Activated naive CD4-positive, alpha-beta T cell treated with anti-CD3 and anti-CD28 coated beads, Interleukin-2, amount 10 ng/mL, durations not matched to agents 7 days and 5 days (primary cell): ENCODE measurements at regions of chr22 and their contacts with region 1.

Region 1: DNA sequence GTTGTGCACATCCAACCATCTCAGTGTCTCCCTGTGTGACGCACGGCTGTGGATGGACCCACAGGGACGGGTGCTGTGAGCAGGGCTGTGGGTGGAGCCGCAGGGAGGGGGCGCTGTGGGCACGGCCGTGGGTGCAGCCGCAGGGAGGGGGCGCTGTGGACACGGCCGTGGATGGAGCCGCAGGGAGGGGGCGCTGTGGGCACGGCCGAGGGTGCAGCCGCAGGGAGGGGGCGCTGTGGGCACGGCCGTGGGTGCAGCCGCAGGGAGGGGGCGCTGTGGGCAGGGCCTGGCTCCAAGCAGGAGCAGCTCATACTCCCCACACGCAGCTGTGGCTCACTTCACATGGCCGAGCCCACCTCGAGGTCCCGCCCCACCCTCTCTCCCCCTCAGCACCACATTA is 6.0 kb upstream of the MAPK11 start:
- DNase-seq: peak; percentile 63
- H3K4me3 Mint-ChIP-seq: no peak overlapping the region
- H3K27ac Mint-ChIP-seq: no peak overlapping the region
- H3K4me1 Mint-ChIP-seq: peaks cover under 1% of the 10 kb centered on the region
- H3K27me3 Mint-ChIP-seq: peaks cover 31% of the 10 kb centered on the region

Region 2: DNA sequence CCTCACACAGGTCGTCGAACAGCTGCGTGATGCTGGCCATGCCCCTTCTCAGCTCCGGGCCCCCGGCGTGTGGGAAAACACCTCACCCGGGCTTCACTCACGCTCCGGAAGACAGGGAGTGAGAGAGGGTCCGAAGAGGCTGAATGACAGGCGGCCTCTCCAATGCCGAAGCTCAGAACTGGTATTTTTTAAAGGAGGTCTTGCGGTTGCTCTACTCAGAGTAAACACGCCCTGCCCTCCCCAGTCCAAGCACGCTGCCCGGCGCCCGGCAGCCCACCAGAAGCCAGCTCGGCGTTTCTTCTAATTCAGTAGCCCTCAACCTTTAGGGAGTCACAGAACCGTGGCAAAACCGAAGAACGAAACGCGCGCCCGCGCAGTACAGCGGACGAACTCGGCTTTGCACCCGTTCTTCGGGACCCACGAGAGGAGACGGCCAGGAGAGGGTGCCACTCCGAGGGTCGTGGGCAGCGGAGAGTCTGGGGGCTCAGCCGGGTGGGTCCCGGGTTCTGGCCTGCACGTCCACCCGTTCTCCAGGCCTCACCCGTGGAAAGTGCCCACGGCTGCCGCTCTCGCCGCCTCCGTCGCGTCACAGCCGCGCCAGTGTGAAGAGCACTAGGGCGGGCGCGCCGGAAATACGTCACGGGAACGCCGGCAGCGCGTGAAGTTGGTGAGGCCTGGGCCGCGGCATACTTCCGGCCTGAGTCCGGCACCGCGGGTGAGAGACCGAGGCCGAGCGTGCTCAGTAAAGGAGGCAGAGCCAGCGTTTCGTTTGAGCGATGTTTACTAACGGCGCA is 31.5 kb before region 1 on chr22 and contains the start of gene TUBGCP6:
- CTCF ChIA-PET with region 1: no interaction called
- DNase-seq: peak; percentile 95
- H3K4me3 Mint-ChIP-seq: peak within 1 kb of the TSS; percentile 97
- H3K27ac Mint-ChIP-seq: peak within 1 kb of the TSS; percentile 98
- H3K4me1 Mint-ChIP-seq: peaks cover 53% of the 10 kb centered on the region
- H3K27me3 Mint-ChIP-seq: no peaks in the 10 kb centered on the region

Region 3: GRCh38 chr22:50326959-50327710 is 51.0 kb after region 1 on chr22 and contains the start of gene DENND6B:
- CTCF ChIA-PET with region 1: interaction called, 11 read pairs
- DNase-seq: peak; percentile 74
- H3K4me3 Mint-ChIP-seq: peak within 1 kb of the TSS; percentile 79
- H3K27ac Mint-ChIP-seq: peak within 1 kb of the TSS; percentile 55
- H3K4me1 Mint-ChIP-seq: peaks cover 13% of the 10 kb centered on the region
- H3K27me3 Mint-ChIP-seq: peaks cover 58% of the 10 kb centered on the region